ENCODE measurements at regions of chr10 and their contacts with region 1.

Region 1: DNA sequence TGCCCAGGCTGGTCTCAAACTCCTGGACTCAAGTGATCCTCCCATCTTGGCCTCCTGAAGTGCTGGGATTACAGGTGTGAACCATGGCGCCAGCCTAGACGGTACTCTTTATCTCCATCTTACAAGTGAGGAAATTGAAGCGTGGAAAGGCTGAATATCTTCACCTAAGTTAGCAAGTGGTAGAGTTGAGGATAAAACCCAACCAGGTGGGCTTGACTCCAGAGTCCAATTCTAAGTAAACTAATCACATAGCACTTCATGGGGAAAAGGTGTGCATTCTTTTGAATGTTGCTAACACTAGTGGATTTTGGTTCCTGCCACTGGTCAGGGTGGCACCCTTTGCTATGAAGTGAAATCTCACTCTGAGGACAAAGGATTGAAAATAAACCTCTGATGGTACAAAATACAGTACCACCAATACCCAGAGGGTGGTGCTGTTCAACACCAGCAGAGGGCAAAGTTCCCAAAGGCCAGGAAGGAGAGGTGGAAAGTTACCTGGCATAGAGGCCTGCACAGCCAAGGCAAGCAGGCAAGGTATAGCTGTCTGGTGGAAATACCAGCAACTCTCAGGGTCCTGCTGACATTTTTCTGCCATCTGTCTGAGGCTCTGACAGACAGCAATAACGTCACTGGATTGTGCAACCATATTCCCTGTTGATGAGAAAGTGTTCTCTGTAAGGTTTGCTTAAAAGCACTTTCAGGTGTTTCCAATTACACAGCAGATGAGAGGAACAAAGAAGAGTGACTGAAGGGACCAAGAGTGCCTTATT is 17.6 kb downstream of the ZDHHC16 start:
- DNase-seq: peak; percentile 42
- ATAC-seq: peak; percentile 85

Region 2: DNA sequence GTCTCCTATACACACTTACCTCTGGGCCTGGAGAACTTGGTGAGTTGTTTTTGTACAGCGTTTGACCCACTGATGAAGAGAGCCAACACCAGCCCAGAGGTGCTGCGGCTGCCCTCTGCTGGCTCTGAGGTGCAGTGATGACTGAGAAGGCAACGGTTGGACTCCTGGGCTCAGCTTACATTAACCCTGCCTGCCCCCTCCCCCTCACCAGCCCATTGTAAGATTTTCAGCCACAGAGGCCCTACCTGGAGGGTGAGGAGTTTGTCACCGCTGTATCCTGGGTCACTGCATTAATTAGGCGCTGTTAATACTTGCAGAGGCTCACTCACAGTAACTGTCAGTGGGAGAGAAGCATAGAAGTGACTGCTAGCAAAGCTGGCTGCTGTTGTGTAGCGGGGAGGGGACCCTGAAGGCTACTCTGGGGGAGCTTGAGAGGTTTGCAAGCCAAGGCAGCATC is 90.1 kb after region 1 on chr10:
- intact Hi-C with region 1: loop called (anchors 5 kb)
- DNase-seq: peak; percentile 84
- ATAC-seq: peak; percentile 90